Ovary (tissue), 10 donors: ENCODE measurements at regions of chr2 and their contacts with region 1.

Region 1: GRCh38 chr2:188978291-188979081 is 4.3 kb downstream of the COL3A1 start:
- DNase-seq: peak in 2 of 5 donors; percentile 27 to 44
- H3K4me3 ChIP-seq: peak overlapping the region; percentile 11
- H3K27ac ChIP-seq: peak overlapping the region; percentile 9 to 79
- H3K4me1 ChIP-seq: peaks cover 1% of the 10 kb centered on the region
- H3K27me3 ChIP-seq: no peaks in the 10 kb centered on the region
- CTCF ChIP-seq: peak in 1 of 3 donors; percentile 19
- EP300 ChIP-seq: peak; percentile 23
- POLR2A ChIP-seq: no peak

Region 2: DNA sequence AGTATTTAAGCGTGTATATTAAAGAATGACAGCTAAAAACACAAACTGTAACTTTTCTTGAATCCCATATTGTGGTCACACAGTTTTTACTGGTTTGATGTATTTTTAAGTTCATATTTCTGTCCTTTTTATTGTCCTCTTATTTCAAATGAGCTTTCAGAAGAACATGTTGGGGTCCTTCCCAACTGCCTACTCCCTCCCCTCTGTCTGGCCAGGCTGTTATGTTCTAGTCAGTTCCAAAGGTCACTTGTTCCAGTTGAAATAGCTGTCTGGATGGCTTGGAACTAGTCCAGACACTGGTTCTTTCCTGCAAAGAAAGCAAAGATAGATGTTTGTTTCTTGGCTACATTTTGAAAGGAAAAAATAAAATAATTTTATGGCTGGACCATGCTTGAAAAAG is 379.9 kb before region 1 on chr2:
- intact Hi-C with region 1: loop called in 1 of 4 experiments (anchors 10 kb)
- DNase-seq: peak in 2 of 5 donors; percentile 35 to 43
- H3K4me3 ChIP-seq: no peak overlapping the region
- H3K27ac ChIP-seq: peak overlapping the region in 1 of 2 donors; percentile 40
- H3K4me1 ChIP-seq: no peaks in the 10 kb centered on the region
- H3K27me3 ChIP-seq: no peaks in the 10 kb centered on the region
- CTCF ChIP-seq: no peak
- EP300 ChIP-seq: no peak
- POLR2A ChIP-seq: no peak

Region 3: DNA sequence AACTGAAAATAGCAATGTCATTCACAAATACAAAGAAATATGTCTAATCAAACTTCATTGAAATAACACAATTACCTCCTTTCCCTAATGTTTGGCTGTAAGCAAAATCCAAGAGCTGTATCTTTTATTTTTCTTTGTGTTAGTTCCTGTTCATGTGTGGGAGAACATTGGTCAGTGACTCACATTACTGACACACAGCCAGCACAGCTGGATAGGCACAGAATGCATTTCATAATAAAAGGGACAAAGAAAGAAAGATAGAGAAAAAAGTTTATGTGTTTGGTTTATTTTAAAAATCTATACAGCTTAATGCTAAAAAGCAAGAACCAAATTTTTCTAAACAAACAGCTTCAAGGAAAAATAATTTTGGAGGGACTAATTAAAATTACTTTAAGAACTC is 189.9 kb before region 1 on chr2:
- intact Hi-C with region 1: loop called in 2 of 4 experiments (anchors 10 kb)
- DNase-seq: peak; percentile 71 to 88 (median 82)
- H3K4me3 ChIP-seq: no peak overlapping the region
- H3K27ac ChIP-seq: peak overlapping the region in 1 of 2 donors; percentile 66
- H3K4me1 ChIP-seq: no peaks in the 10 kb centered on the region
- H3K27me3 ChIP-seq: no peaks in the 10 kb centered on the region
- CTCF ChIP-seq: no peak
- EP300 ChIP-seq: no peak
- POLR2A ChIP-seq: no peak